Dorsolateral prefrontal cortex (tissue), 120 donors: ENCODE measurements at regions of chr1 and their contacts with region 1.

Region 1: DNA sequence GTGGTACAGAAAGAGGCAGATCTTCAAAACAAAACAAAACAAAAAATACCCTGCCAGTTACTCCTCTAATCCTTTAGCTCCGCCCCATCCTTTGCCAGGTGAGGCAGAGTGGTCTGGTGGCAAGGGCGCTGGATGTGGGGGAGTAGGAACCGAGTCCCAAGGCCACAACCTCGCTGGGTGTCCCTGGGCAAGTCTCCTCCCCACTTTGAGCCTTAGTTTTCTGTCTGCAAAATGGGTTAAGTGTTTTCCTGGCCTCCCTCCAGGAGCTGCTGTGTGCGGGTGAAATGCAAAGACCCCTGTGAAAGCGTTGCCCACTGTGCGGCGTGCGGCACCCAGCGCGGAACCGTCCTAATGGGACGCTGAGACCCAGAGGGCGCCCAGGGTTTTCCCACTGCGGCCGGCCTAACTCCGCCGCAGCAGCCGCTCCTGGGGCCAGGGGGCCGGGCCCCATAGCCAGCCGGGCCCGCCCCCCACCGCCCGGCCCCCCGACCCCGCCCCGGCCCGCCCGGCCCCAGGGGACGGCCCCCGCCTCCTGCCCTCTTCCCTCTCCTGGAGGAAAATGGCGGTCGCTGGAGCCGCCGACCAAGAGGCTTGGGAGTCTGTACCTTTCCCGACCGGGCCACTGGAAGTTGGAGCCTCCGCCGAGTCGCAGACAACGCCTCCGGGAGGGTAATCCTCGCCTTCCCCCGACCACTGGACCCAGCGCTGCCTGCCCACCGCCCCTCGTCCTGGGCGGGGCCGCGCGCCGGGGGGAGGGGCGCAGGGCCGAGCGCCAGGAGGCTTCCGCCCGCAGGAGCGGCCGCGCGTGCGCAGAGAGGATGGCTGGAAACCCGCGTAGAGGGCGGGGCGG is at the starts of genes ERMAP and SVBP:
- DNase-seq: peak; percentile 81 to 95 (median 90)
- H3K4me3 ChIP-seq: peak within 1 kb of the TSS; percentile 64 to 94 (median 79)
- H3K27ac ChIP-seq: peak within 1 kb of the TSS; percentile 79 to 99 (median 96)
- H3K27me3 ChIP-seq: no peaks in the 10 kb centered on the region
- CTCF ChIP-seq: peak in 19 of 56 donors; percentile 5 to 52 (median 22)
- total RNA-seq, gene ERMAP: 5.9 to 20.1 (median 10.3) TPM
- total RNA-seq, gene SVBP: 12.2 to 34.0 (median 22.7) TPM

Region 2: DNA sequence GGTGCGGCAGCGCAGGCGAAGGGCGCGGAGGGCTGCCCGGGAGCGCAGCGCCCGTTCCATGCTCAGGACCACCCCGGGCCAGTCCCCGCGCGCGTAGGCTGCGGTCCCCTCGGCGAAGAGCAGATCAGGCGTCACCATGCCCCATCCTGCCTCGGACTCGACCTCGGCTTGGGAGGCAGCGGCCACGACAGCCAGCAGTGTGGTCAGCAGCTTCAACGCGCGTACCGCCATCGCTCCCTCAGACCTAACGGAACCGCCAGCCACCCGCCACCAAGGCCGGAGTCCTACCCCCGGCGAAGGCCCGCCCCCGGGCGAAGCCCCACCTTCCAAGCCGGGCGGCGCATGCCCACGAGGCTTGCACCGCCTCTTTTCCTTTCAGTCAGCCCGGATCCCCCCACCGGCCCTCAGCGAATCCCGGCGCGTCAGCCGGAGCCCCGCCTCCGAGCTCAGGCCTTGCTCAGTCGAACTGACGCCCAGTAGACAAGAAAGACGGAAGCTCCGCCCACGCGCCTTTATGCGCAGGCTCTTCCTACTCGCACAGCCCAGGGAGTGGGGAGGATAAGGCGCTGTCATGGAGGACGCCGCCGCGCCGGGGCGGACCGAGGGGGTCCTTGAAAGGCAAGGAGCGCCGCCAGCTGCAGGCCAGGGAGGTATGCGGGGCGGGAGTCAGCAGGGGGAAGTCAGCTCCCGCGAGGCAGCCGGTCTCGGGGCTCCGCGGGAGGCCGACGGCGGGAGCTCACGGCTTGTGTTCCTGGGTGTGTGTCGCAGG is 49.9 kb before region 1 on chr1 and contains the starts of genes C1orf50 and P3H1:
- intact Hi-C with region 1: loop called (anchors 2 kb)
- DNase-seq: peak; percentile 99 to 100 (median 100)
- H3K4me3 ChIP-seq: peak within 1 kb of the TSS; percentile 75 to 100 (median 96)
- H3K27ac ChIP-seq: peak within 1 kb of the TSS; percentile 38 to 97 (median 88)
- H3K27me3 ChIP-seq: no peaks in the 10 kb centered on the region
- CTCF ChIP-seq: peak in 25 of 56 donors; percentile 5 to 62 (median 26)
- total RNA-seq, gene C1orf50: 5.1 to 19.5 (median 10.6) TPM
- total RNA-seq, gene P3H1: 13.8 to 34.7 (median 21.9) TPM